MCF 10A (cell line): ENCODE measurements at regions of chr14 and their contacts with region 1.

Region 1: DNA sequence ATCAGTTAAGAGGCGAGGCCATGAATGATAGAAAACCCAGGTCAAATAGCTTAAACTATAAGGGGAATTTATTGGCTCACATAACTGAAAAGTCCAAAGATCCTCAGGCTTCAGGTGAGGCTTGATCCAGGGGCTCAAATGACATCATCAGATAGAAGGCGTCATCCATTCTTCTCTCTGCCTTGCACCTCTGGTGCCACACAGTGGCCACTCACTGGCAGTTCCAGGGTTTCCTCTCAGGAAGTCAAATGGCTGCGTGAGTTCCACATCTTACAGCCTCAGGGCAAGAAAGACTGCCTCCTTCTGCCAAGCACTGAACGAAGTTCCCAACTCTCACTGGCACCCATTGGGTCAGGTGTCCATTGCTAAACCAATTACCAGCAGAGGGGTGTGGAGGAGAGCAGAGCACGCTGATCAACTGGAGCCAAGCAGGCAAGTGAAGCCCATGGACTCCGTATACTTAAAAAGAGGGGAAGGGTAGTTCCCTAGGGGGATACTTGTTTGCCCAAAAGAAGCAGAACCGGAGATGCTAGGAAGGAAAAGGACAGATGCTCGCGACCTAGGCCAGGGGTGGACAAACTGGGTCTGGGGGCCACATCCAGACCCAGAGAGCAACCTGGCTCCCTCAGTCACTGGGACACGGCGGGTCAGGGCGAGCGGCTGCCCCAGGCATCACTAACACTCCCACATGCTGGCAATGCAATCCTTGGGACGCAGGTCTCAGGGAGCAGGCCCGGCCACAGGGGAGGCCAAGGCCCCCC is 69.3 kb downstream of the SERPINA3 start:
- DNase-seq: peak; percentile 83
- H3K4me3 Mint-ChIP-seq: no peak overlapping the region
- H3K27ac Mint-ChIP-seq: no peak overlapping the region
- H3K4me1 Mint-ChIP-seq: no peaks in the 10 kb centered on the region
- H3K27me3 Mint-ChIP-seq: no peaks in the 10 kb centered on the region
- CTCF ChIP-seq: peak; percentile 79

Region 2: GRCh38 chr14:94373708-94374107 is 307.8 kb before region 1 on chr14:
- CTCF ChIA-PET with region 1: no interaction called
- POLR2A ChIA-PET with region 1: no interaction called
- intact Hi-C with region 1: no loop called
- DNase-seq: peak; percentile 96
- H3K4me3 Mint-ChIP-seq: no peak overlapping the region
- H3K27ac Mint-ChIP-seq: peak overlapping the region; percentile 83
- H3K4me1 Mint-ChIP-seq: peaks cover 20% of the 10 kb centered on the region
- H3K27me3 Mint-ChIP-seq: no peaks in the 10 kb centered on the region
- CTCF ChIP-seq: no peak

Region 3: GRCh38 chr14:94423453-94424056 is 257.9 kb before region 1 on chr14:
- CTCF ChIA-PET with region 1: no interaction called
- POLR2A ChIA-PET with region 1: no interaction called
- intact Hi-C with region 1: loop called (anchors 1 kb)
- DNase-seq: peak; percentile 71
- H3K4me3 Mint-ChIP-seq: peak overlapping the region; percentile 22
- H3K27ac Mint-ChIP-seq: no peak overlapping the region
- H3K4me1 Mint-ChIP-seq: no peaks in the 10 kb centered on the region
- H3K27me3 Mint-ChIP-seq: no peaks in the 10 kb centered on the region
- CTCF ChIP-seq: peak; percentile 32

Region 4: DNA sequence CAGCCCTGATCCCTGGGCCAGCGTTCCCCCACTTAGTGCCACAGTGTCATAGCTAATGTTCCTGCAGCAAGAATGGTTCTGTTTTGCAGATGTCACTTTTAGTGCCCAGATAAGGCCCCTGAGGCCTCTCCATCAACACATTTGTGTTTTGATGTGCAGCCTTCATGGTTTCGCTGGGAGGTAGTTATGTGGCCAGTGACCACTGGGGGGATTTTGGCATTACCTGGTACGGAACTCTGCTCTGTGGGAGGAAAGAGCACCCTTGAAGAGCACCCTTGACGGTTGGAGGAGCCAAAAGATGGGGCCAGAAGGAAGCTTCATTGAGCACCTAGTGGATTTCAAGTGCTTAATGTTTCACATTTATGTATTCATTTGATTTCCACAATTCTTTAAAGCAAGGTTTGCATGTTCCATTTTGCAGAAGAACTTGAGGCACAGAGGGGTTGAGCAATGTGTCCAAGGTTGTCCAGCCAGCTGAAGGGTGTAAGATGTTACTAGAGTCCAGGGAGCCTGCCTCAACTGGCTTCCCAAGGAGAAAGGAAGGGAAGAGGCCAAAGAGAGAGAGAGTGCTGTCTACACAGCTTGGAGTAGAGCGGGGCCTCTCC is 241.9 kb before region 1 on chr14:
- CTCF ChIA-PET with region 1: interaction called, 8 read pairs
- POLR2A ChIA-PET with region 1: no interaction called
- intact Hi-C with region 1: loop called (anchors 1 kb)
- DNase-seq: no peak
- H3K4me3 Mint-ChIP-seq: no peak overlapping the region
- H3K27ac Mint-ChIP-seq: no peak overlapping the region
- H3K4me1 Mint-ChIP-seq: no peaks in the 10 kb centered on the region
- H3K27me3 Mint-ChIP-seq: no peaks in the 10 kb centered on the region
- CTCF ChIP-seq: no peak

Region 5: GRCh38 chr14:94494085-94494484 is 187.4 kb before region 1 on chr14:
- CTCF ChIA-PET with region 1: no interaction called
- POLR2A ChIA-PET with region 1: no interaction called
- intact Hi-C with region 1: no loop called
- DNase-seq: no peak
- H3K4me3 Mint-ChIP-seq: no peak overlapping the region
- H3K27ac Mint-ChIP-seq: no peak overlapping the region
- H3K4me1 Mint-ChIP-seq: no peaks in the 10 kb centered on the region
- H3K27me3 Mint-ChIP-seq: peaks cover 13% of the 10 kb centered on the region
- CTCF ChIP-seq: no peak

Region 6: GRCh38 chr14:94612174-94612573 is 69.3 kb before region 1 on chr14 and contains the start of gene SERPINA3:
- CTCF ChIA-PET with region 1: interaction called, 3 read pairs
- POLR2A ChIA-PET with region 1: interaction called, 3 read pairs
- intact Hi-C with region 1: loop called (anchors 1 kb)
- DNase-seq: peak; percentile 65
- H3K4me3 Mint-ChIP-seq: peak within 1 kb of the TSS; percentile 59
- H3K27ac Mint-ChIP-seq: peak within 1 kb of the TSS; percentile 88
- H3K4me1 Mint-ChIP-seq: peaks cover 12% of the 10 kb centered on the region
- H3K27me3 Mint-ChIP-seq: no peaks in the 10 kb centered on the region
- CTCF ChIP-seq: no peak
- total RNA-seq, gene SERPINA3: 44.5 and 54.5 TPM in 2 replicates